Left ventricle myocardium superior (tissue), 1 donor: ENCODE measurements at regions of chr1 and their contacts with region 1.

Region 1: GRCh38 chr1:234722904-234723720 is 113.1 kb upstream of the IRF2BP2 start:
- DNase-seq: peak; percentile 69
- ATAC-seq: peak; percentile 34

Region 2: DNA sequence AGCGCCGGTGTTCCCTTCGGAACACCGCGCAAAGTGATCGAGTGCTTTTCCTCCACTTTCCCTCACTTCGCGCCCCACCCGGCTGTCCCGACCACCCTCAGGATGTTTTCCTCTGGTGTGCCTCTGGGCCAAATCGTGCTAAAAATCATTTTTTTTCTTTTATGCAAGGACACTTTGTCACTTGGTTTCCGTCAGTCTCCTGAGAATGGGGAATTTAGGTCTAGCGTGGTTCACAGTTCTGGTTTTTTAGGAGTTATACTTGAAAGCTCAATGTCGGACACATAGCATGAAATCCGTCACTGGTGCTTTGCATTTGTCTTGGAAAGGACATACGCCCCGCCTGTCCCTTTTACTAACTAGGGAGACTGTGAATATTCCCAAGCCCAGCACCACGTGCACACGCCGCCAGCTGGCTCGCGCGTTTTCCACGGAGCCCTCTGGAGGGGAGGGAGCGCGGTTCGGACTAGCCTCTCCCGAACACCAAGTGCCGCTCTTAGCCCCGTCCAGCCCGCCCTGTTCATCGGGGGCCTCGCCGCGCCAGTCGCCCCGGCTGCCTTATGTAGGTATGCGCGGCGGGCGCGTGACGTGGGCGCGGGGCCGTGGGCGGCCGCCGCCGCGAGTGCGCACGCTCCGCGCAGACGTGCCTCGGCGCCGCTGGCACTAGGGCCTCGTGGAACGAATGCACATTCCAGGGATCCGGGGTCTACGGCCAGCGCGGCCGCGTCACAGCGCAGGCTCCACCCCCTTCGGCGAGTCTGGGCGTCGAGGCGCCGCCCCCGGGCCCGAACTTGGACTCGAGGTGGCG is 112.6 kb before region 1 on chr1:
- intact Hi-C with region 1: loop called (anchors 5 kb)
- DNase-seq: peak; percentile 99
- ATAC-seq: peak; percentile 75

Region 3: DNA sequence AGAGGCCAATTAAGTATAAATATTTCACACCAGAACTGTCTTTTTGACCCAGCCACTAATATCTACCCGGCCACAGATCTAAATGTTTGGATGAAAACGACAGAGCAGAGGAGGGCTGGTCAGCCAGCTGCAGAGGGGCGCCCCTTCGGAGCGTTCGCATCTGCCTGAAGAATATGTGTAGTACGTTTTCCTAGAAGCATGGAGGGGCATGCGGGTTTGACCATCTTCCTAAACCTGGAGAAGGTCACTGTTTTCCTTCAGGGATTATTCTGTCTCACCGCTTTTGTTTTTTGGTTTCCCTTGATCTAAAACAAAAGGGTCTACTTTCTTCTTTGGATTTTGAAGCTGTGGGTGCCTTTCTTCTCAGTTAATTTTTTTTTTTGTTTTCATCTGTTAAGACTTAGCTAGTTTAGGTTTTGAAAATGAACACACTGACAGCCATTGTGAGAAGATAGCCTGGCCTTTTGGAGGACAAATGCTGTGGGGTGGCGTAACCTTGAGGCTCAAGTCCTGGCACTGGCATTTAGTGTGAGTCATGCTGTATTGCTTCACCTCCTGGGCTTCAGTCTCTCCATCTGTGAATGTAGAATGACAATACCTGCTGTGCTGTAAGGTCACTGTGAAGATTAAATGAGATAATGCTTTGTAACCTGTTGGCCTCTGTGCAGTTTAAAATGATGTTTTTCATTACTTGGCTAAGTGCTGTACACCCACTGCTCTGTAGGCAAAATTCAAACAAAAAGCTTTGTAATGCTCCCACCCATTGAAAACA is 39.1 kb before region 1 on chr1:
- intact Hi-C with region 1: no loop called
- DNase-seq: peak; percentile 59
- ATAC-seq: peak; percentile 99

Region 4: DNA sequence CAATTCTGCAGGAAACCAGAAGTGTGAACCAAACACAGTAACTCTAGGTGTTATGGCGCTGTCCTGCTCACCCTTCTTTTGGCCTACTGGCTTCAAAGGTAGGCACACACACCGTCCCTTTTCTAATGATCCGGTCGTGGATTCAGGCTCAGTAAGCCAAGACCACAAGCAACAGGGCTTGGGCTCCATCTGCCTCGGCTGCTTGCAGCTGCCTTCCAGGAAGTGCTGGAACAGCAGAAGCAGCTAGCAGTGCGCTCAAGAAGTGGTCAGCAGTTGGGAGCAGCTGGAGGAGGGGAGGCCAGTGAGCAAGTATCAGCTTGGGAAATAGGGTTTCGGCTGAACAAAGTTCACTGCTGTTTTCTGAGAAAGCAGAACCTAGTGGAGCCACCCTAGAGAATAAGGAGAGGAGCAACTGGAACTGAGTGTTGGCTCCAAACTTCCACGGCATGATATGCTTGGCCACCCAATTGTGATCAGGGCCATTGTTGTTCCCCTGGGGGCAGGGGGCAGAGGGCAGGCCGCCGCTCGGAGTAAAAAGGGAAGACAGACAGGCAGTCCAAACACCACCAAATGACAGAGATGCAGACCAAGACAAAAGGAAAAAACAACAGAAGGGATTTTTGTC is 232.1 kb after region 1 on chr1:
- intact Hi-C with region 1: no loop called
- DNase-seq: peak; percentile 82
- ATAC-seq: peak; percentile 92